GM12878 (cell line): ENCODE measurements at regions of chr6 and their contacts with region 1.

Region 1: DNA sequence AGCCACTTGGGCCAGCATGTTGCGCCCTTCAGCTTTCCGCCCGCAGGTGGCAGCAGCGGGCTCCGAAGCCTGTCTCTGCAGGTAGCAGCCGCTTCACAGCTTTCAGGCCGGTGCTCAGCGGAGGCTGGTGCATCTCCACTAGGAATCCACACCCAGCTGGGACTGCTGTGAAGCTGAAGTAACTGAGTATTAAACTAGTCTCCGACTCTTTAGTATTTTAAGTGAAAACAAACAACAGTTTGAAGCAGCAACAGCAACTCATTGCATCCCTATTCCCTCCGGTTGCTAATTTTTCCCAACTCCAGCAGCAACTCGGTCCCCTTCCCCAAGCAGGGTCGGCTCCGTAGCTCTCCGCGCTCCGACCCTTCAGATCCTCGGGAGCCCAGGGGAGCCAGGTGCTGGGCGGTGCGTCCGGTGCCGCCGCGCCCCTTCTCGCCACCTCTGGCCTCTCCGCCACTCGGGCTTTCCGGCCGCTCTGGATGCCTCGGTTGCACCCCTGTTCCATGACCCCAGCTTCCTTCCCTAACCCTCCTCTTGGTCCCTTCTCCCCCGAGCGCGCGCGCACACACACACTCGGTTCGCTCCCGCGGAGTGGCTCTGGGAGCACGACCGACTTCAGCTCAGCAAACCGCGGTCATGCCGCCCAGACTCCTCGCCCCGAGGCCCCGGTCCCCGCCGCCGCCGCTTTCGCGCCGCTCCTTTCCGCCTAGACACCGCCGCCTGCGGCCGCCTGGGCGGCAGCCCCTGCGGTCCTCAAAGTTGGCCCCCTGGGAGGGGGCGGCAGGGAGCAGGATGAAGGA is 768 bp upstream of the NKAIN2 start:
- DNase-seq: no peak
- ATAC-seq: peak; percentile 100
- H3K4me3 ChIP-seq: peak overlapping the region; percentile 41
- H3K27ac ChIP-seq: no peak overlapping the region
- H3K4me1 ChIP-seq: peaks cover 3% of the 10 kb centered on the region; the same call in 1 of the 2 replicates
- H3K27me3 ChIP-seq: peaks cover 3 to 14% of the 10 kb centered on the region in 2 experiments
- CTCF ChIP-seq: peak; percentile 82 to 90 (median 88)
- EP300 ChIP-seq: no peak
- POLR2A ChIP-seq: no peak
- RAD21 ChIP-seq: peak; percentile 86

Region 2: DNA sequence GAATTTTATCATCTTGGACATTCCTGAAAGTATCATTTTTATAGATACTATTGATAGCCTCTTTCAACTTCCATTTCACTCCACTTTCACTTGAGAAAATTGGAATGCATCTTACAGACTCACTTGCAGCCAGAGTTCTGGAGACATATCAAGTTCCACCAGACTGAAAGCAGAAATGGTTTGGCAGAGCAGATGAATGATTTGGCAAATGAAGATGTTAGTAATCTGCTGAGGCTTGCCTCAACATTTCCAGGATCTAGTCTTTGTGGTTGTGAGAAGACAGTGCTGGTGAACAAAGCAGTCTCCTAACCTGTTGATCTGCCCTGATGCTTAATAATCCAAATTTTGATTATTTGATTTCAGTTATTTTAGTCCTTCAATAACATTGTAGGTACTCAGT is 368.7 kb before region 1 on chr6:
- CTCF ChIA-PET with region 1: no interaction called
- POLR2A ChIA-PET with region 1: no interaction called
- RAD21 ChIA-PET with region 1: no interaction called
- SMC1A ChIA-PET with region 1: no interaction called
- in situ Hi-C with region 1: no loop called
- intact Hi-C with region 1: no loop called
- DNase-seq: no peak
- ATAC-seq: no peak
- H3K4me3 ChIP-seq: no peak overlapping the region
- H3K27ac ChIP-seq: no peak overlapping the region
- H3K4me1 ChIP-seq: no peaks in the 10 kb centered on the region
- H3K27me3 ChIP-seq: no peaks in the 10 kb centered on the region
- CTCF ChIP-seq: no peak
- EP300 ChIP-seq: no peak
- POLR2A ChIP-seq: no peak
- RAD21 ChIP-seq: no peak

Region 3: GRCh38 chr6:123687864-123688263 is 115.0 kb before region 1 on chr6:
- CTCF ChIA-PET with region 1: no interaction called
- POLR2A ChIA-PET with region 1: no interaction called
- RAD21 ChIA-PET with region 1: no interaction called
- SMC1A ChIA-PET with region 1: no interaction called
- in situ Hi-C with region 1: no loop called
- intact Hi-C with region 1: no loop called
- DNase-seq: no peak
- ATAC-seq: peak; percentile 25; the same call in 1 of the 3 replicates
- H3K4me3 ChIP-seq: no peak overlapping the region
- H3K27ac ChIP-seq: no peak overlapping the region
- H3K4me1 ChIP-seq: no peaks in the 10 kb centered on the region
- H3K27me3 ChIP-seq: no peaks in the 10 kb centered on the region
- CTCF ChIP-seq: no peak
- EP300 ChIP-seq: no peak
- POLR2A ChIP-seq: no peak
- RAD21 ChIP-seq: no peak

Region 4: DNA sequence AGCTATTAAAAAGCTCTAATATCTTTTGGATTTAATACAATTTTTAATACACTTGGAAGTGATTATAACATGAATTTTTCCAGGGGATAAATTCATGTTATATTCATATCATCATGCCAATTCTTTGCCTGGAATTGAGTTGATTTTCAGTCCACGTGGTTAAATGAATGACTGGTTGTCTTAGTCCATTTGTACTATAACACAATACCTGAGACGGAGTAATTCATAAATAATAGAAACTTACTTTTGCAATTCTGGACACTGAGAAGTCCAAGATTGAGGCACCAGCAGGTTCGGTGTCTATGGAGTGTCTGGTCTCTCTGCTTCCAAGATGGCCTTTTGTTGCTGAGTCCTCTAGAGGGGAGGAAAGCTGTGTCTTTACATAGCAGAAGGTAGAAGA is 100.0 kb before region 1 on chr6:
- CTCF ChIA-PET with region 1: no interaction called
- POLR2A ChIA-PET with region 1: no interaction called
- RAD21 ChIA-PET with region 1: no interaction called
- SMC1A ChIA-PET with region 1: no interaction called
- in situ Hi-C with region 1: no loop called
- intact Hi-C with region 1: no loop called
- DNase-seq: no peak
- ATAC-seq: no peak
- H3K4me3 ChIP-seq: no peak overlapping the region
- H3K27ac ChIP-seq: no peak overlapping the region
- H3K4me1 ChIP-seq: no peaks in the 10 kb centered on the region
- H3K27me3 ChIP-seq: no peaks in the 10 kb centered on the region
- CTCF ChIP-seq: no peak
- EP300 ChIP-seq: no peak
- POLR2A ChIP-seq: no peak
- RAD21 ChIP-seq: no peak

Region 5: DNA sequence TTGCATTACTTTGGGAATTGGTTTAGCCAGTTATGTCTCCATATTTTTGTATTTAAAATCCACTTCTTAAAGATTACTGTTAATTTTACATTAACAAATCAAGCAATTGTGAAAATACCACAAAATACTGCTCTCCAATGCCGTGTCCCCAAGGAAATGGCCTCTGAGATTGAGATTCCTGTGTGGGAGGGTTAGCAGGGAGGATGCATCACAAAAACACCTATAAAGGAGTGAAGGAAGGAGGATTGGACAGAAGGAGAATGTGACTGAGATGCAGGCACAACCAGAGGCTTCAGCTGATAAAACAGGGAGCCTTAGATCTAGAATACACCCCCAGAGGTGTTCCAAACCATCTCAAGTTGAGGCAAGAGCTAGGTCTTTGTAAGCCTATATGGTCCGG is 33.5 kb before region 1 on chr6:
- CTCF ChIA-PET with region 1: interaction called, 10 read pairs
- POLR2A ChIA-PET with region 1: no interaction called
- RAD21 ChIA-PET with region 1: interaction called, 3 read pairs
- SMC1A ChIA-PET with region 1: interaction called, 4 read pairs
- in situ Hi-C with region 1: no loop called
- intact Hi-C with region 1: no loop called
- DNase-seq: no peak
- ATAC-seq: peak; percentile 13; the same call in 2 of the 3 replicates
- H3K4me3 ChIP-seq: no peak overlapping the region
- H3K27ac ChIP-seq: peak overlapping the region; percentile 46
- H3K4me1 ChIP-seq: peaks cover 11% of the 10 kb centered on the region
- H3K27me3 ChIP-seq: no peaks in the 10 kb centered on the region
- CTCF ChIP-seq: no peak
- EP300 ChIP-seq: no peak
- POLR2A ChIP-seq: no peak
- RAD21 ChIP-seq: no peak

Region 6: GRCh38 chr6:123788319-123788718 is 14.6 kb before region 1 on chr6:
- CTCF ChIA-PET with region 1: interaction called, 9 read pairs
- POLR2A ChIA-PET with region 1: no interaction called
- RAD21 ChIA-PET with region 1: interaction called, 4 read pairs
- SMC1A ChIA-PET with region 1: interaction called, 12 read pairs
- in situ Hi-C with region 1: no loop called
- intact Hi-C with region 1: no loop called
- DNase-seq: no peak
- ATAC-seq: peak; percentile 72
- H3K4me3 ChIP-seq: no peak overlapping the region
- H3K27ac ChIP-seq: no peak overlapping the region
- H3K4me1 ChIP-seq: no peaks in the 10 kb centered on the region
- H3K27me3 ChIP-seq: no peaks in the 10 kb centered on the region
- CTCF ChIP-seq: no peak
- EP300 ChIP-seq: no peak
- POLR2A ChIP-seq: no peak
- RAD21 ChIP-seq: no peak

Region 7: GRCh38 chr6:123838505-123839234 is 35.8 kb after region 1 on chr6:
- CTCF ChIA-PET with region 1: no interaction called
- POLR2A ChIA-PET with region 1: no interaction called
- RAD21 ChIA-PET with region 1: no interaction called
- SMC1A ChIA-PET with region 1: no interaction called
- in situ Hi-C with region 1: no loop called
- intact Hi-C with region 1: no loop called
- DNase-seq: no peak
- ATAC-seq: no peak
- H3K4me3 ChIP-seq: no peak overlapping the region
- H3K27ac ChIP-seq: no peak overlapping the region
- H3K4me1 ChIP-seq: no peaks in the 10 kb centered on the region
- H3K27me3 ChIP-seq: no peaks in the 10 kb centered on the region
- CTCF ChIP-seq: no peak
- EP300 ChIP-seq: no peak
- POLR2A ChIP-seq: no peak
- RAD21 ChIP-seq: no peak

Region 8: DNA sequence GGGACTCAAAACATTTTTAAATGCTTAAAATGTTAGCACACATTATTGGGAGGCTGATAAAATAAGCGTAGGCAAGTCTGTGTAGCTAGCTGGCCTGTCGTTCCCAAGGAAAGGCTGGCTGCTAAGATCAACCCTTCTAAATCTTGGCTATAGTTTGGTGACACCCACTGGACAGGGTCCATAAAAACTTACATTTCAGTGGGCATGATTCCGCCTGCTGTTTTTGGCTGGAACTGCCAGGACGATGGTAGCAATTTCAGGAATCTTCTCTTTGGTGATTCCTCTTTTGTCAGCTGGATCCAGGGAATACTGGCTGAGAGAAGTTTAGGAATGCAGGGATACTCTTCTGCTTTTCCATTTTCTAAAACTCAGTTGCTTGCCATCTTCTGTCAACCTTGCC is 163.0 kb after region 1 on chr6:
- CTCF ChIA-PET with region 1: interaction called, 10 read pairs
- POLR2A ChIA-PET with region 1: no interaction called
- RAD21 ChIA-PET with region 1: interaction called, 6 read pairs
- SMC1A ChIA-PET with region 1: interaction called, 4 read pairs
- in situ Hi-C with region 1: no loop called
- intact Hi-C with region 1: loop called (anchors 1 kb)
- DNase-seq: no peak
- ATAC-seq: no peak
- H3K4me3 ChIP-seq: no peak overlapping the region
- H3K27ac ChIP-seq: no peak overlapping the region
- H3K4me1 ChIP-seq: no peaks in the 10 kb centered on the region
- H3K27me3 ChIP-seq: no peaks in the 10 kb centered on the region
- CTCF ChIP-seq: peak; percentile 7 to 49 (median 12); a peak in 3 of 6 replicates
- EP300 ChIP-seq: no peak
- POLR2A ChIP-seq: no peak
- RAD21 ChIP-seq: peak; percentile 20; the same call in 1 of the 2 replicates

Region 9: GRCh38 chr6:124054034-124054433 is 251.1 kb after region 1 on chr6:
- CTCF ChIA-PET with region 1: interaction called, 4 read pairs
- POLR2A ChIA-PET with region 1: no interaction called
- RAD21 ChIA-PET with region 1: no interaction called
- SMC1A ChIA-PET with region 1: no interaction called
- in situ Hi-C with region 1: no loop called
- intact Hi-C with region 1: loop called (anchors 5 kb)
- DNase-seq: no peak
- ATAC-seq: no peak
- H3K4me3 ChIP-seq: no peak overlapping the region
- H3K27ac ChIP-seq: no peak overlapping the region
- H3K4me1 ChIP-seq: no peaks in the 10 kb centered on the region
- H3K27me3 ChIP-seq: no peaks in the 10 kb centered on the region
- CTCF ChIP-seq: no peak
- EP300 ChIP-seq: no peak
- POLR2A ChIP-seq: no peak
- RAD21 ChIP-seq: no peak

Region 10: GRCh38 chr6:124795643-124796463 is 993.0 kb after region 1 on chr6:
- CTCF ChIA-PET with region 1: interaction called, 4 read pairs
- POLR2A ChIA-PET with region 1: no interaction called
- RAD21 ChIA-PET with region 1: no interaction called
- SMC1A ChIA-PET with region 1: no interaction called
- in situ Hi-C with region 1: loop called (anchors 25 kb)
- intact Hi-C with region 1: loop called (anchors 2 kb)
- DNase-seq: no peak
- ATAC-seq: peak; percentile 51; the same call in 2 of the 3 replicates
- H3K4me3 ChIP-seq: no peak overlapping the region
- H3K27ac ChIP-seq: no peak overlapping the region
- H3K4me1 ChIP-seq: no peaks in the 10 kb centered on the region
- H3K27me3 ChIP-seq: no peaks in the 10 kb centered on the region
- CTCF ChIP-seq: peak; percentile 8 to 48 (median 26); a peak in 3 of 6 replicates
- EP300 ChIP-seq: no peak
- POLR2A ChIP-seq: no peak
- RAD21 ChIP-seq: peak; percentile 33

Region 11: DNA sequence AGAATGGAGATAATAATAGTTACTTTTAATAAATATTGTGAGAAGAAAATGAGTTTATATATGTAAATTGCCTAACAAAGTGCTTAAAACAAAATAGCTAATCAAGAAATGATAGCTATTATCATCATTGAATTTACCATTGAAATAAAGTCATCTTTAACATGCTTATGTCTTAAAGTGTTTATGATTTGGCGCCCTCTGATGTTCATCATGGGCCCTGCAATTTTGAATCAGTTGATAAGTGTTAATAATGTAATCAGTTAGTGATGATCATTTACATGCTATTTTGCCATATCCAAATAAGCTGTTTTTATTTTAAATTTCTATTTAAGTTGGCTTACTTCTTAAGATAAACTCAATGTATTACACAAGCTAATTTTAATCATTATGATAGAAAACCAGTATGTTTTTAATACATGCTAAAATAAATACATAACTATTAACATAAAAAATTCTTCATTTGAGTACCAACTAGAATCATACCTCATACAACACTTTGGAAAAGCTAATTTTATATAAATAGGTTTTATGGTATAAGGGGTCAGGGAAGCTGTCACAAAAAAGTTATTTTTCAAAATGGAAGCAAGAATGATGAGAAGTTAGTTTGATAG is 1311.5 kb after region 1 on chr6:
- CTCF ChIA-PET with region 1: interaction called, 5 read pairs
- POLR2A ChIA-PET with region 1: no interaction called
- RAD21 ChIA-PET with region 1: interaction called, 10 read pairs
- SMC1A ChIA-PET with region 1: interaction called, 5 read pairs
- in situ Hi-C with region 1: no loop called
- intact Hi-C with region 1: no loop called
- DNase-seq: no peak
- ATAC-seq: peak; percentile 64; the same call in 2 of the 3 replicates
- H3K4me3 ChIP-seq: no peak overlapping the region
- H3K27ac ChIP-seq: no peak overlapping the region
- H3K4me1 ChIP-seq: no peaks in the 10 kb centered on the region
- H3K27me3 ChIP-seq: no peaks in the 10 kb centered on the region; a peak in 1 of 4 replicates
- CTCF ChIP-seq: peak; percentile 54 to 68 (median 62)
- EP300 ChIP-seq: no peak
- POLR2A ChIP-seq: no peak
- RAD21 ChIP-seq: peak; percentile 53